ENCODE measurements at regions of chr4 and their contacts with region 1.

Region 1: DNA sequence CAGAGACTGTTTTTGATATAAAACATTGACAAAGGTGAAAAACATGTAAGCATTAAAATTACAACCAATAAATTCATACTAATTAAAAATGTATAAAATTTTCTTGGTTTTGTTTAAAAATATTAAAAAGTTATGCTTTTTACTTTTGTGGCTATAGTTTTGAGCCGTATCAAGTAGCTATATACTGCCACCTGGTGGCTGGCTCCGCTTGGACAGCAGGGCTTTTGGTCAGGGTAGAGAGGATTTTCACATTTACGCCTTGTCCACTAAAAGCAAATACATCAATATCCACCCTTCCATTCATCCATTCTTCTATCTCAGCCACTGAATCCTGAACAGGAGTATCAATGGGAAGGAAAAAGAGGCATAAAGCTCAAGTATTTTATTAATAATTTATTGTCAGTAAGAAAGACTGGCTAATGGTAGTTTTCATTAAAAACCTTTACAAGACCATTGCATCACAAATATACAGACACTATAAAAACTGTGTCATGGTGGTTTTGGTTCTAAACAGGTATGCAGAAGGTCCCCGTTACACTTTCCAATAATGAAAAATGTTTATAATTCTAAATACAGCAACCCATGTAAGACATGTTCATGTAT is 32.1 kb upstream of the MTNR1A start:
- DNase-seq: peak; percentile 79
- H3K4me3 Mint-ChIP-seq: no peak overlapping the region
- H3K27ac Mint-ChIP-seq: no peak overlapping the region
- H3K4me1 Mint-ChIP-seq: no peaks in the 10 kb centered on the region
- H3K27me3 Mint-ChIP-seq: peaks cover 2% of the 10 kb centered on the region

Region 2: GRCh38 chr4:186067757-186068385 is 519.6 kb before region 1 on chr4:
- CTCF ChIA-PET with region 1: interaction called, 5 read pairs
- intact Hi-C with region 1: loop called (anchors 1 kb)
- DNase-seq: peak; percentile 65
- H3K4me3 Mint-ChIP-seq: no peak overlapping the region
- H3K27ac Mint-ChIP-seq: no peak overlapping the region
- H3K4me1 Mint-ChIP-seq: peaks cover 11% of the 10 kb centered on the region
- H3K27me3 Mint-ChIP-seq: peaks cover 7% of the 10 kb centered on the region

Region 3: DNA sequence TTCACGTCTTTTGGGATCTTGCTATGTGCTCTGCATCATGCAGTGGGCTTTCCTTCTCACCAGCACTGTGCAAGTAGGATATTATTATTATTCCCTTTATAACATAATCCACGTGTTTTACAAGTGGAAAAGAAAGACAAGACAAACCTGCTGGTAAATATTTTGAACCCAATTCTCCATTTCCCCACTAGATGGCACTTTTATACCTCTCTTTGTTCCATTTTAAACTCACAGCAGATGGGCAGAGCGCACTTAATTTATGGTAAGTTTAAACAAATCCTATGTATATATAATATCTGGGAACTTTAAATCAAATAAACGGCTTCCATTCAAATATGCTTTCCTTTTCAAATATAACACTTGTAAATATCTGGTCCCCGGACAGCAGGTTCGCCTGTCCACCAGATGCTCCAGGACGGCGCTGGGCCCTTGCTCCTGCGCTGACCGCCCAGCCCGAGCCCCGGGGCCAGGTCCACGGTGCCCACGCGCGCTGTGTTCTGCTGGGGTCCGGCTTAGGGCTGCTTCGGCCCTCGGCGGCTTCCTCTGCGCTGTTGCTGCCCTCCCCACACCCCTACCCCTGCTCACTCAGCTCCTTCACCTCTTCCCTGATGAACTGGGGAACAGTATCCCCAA is 290.4 kb before region 1 on chr4:
- CTCF ChIA-PET with region 1: interaction called, 28 read pairs
- intact Hi-C with region 1: loop called (anchors 1 kb)
- DNase-seq: no peak
- H3K4me3 Mint-ChIP-seq: no peak overlapping the region
- H3K27ac Mint-ChIP-seq: no peak overlapping the region
- H3K4me1 Mint-ChIP-seq: peaks cover 2% of the 10 kb centered on the region
- H3K27me3 Mint-ChIP-seq: peaks cover 33% of the 10 kb centered on the region

Region 4: GRCh38 chr4:186366326-186366725 is 221.2 kb before region 1 on chr4:
- CTCF ChIA-PET with region 1: interaction called, 4 read pairs
- intact Hi-C with region 1: loop called (anchors 2 kb)
- DNase-seq: no peak
- H3K4me3 Mint-ChIP-seq: no peak overlapping the region
- H3K27ac Mint-ChIP-seq: no peak overlapping the region
- H3K4me1 Mint-ChIP-seq: no peaks in the 10 kb centered on the region
- H3K27me3 Mint-ChIP-seq: no peaks in the 10 kb centered on the region

Region 5: GRCh38 chr4:186472948-186473347 is 114.6 kb before region 1 on chr4:
- CTCF ChIA-PET with region 1: no interaction called
- intact Hi-C with region 1: loop called (anchors 1 kb)
- DNase-seq: no peak
- H3K4me3 Mint-ChIP-seq: no peak overlapping the region
- H3K27ac Mint-ChIP-seq: no peak overlapping the region
- H3K4me1 Mint-ChIP-seq: no peaks in the 10 kb centered on the region
- H3K27me3 Mint-ChIP-seq: peaks cover 9% of the 10 kb centered on the region

Region 6: GRCh38 chr4:187268940-187269339 is 681.4 kb after region 1 on chr4:
- CTCF ChIA-PET with region 1: no interaction called
- intact Hi-C with region 1: no loop called
- DNase-seq: no peak
- H3K4me3 Mint-ChIP-seq: no peak overlapping the region
- H3K27ac Mint-ChIP-seq: no peak overlapping the region
- H3K4me1 Mint-ChIP-seq: no peaks in the 10 kb centered on the region
- H3K27me3 Mint-ChIP-seq: no peaks in the 10 kb centered on the region